ENCODE measurements at regions of chr10 and their contacts with region 1.

Region 1: GRCh38 chr10:69004821-69005220 is 16.2 kb downstream of the KIFBP start:
- DNase-seq: no peak
- ATAC-seq: peak; percentile 61
- H3K4me3 Mint-ChIP-seq: no peak overlapping the region
- H3K27ac Mint-ChIP-seq: no peak overlapping the region
- H3K4me1 Mint-ChIP-seq: peaks cover 8% of the 10 kb centered on the region
- H3K27me3 Mint-ChIP-seq: no peaks in the 10 kb centered on the region

Region 2: GRCh38 chr10:68950598-68950997 is 54.2 kb before region 1 on chr10:
- CTCF ChIA-PET with region 1: no interaction called
- DNase-seq: no peak
- ATAC-seq: no peak
- H3K4me3 Mint-ChIP-seq: no peak overlapping the region
- H3K27ac Mint-ChIP-seq: no peak overlapping the region
- H3K4me1 Mint-ChIP-seq: peaks cover 3% of the 10 kb centered on the region
- H3K27me3 Mint-ChIP-seq: no peaks in the 10 kb centered on the region

Region 3: GRCh38 chr10:69092959-69093850 is 88.4 kb after region 1 on chr10:
- CTCF ChIA-PET with region 1: interaction called, 90 read pairs
- DNase-seq: peak; percentile 93
- ATAC-seq: peak; percentile 32
- H3K4me3 Mint-ChIP-seq: peak overlapping the region; percentile 39
- H3K27ac Mint-ChIP-seq: peak overlapping the region; percentile 99
- H3K4me1 Mint-ChIP-seq: peaks cover 68% of the 10 kb centered on the region
- H3K27me3 Mint-ChIP-seq: no peaks in the 10 kb centered on the region

Region 4: GRCh38 chr10:69101451-69102095 is 96.8 kb after region 1 on chr10:
- CTCF ChIA-PET with region 1: interaction called, 90 read pairs
- DNase-seq: peak; percentile 79
- ATAC-seq: peak; percentile 70
- H3K4me3 Mint-ChIP-seq: peak overlapping the region; percentile 32
- H3K27ac Mint-ChIP-seq: peak overlapping the region; percentile 85
- H3K4me1 Mint-ChIP-seq: peaks cover 40% of the 10 kb centered on the region
- H3K27me3 Mint-ChIP-seq: no peaks in the 10 kb centered on the region

Region 5: DNA sequence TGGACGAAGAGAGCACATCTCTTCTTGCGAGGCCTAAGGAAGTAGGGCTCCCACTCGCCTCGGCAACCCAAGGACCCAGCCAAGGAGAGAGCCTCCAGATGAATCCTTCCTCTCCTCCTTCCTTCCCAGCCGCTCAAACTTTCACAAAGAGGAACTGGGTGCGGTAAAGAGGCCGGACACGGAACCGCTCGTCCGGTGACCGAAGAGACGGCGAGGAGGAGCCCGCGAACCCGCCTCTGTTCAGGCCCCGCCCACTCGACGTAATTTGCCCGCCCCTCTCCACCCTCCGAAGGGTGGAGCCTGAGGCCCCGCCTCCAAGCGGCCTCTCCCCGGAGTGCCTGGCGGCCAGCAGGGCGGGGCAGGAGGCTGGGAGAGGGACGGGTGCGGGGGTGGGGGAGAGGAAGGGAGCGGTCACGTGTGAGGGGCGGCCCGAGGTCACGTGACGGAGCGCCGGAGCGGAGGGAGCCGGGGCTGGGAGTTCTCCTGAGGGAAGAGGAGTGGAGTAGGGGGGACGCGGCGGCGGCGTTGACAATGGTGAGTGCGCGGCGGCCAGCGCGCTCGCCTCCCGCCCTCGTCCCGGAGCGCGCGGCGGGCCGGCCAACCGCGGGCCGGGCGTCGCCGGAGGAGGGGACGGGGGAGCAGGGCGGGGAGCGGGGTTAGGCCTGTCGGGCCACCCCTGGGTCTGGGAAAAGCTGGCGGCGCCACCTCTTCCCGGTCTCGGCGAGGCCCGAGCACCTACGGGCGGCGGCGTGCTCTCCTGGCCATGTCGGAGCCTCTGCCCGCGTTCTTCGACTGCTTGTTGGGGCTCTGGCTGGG is 119.1 kb after region 1 on chr10 and contains the start of gene VPS26A:
- CTCF ChIA-PET with region 1: interaction called, 15 read pairs
- DNase-seq: peak; percentile 99
- ATAC-seq: peak; percentile 92
- H3K4me3 Mint-ChIP-seq: peak within 1 kb of the TSS; percentile 89
- H3K27ac Mint-ChIP-seq: peak within 1 kb of the TSS; percentile 94
- H3K4me1 Mint-ChIP-seq: peaks cover 29% of the 10 kb centered on the region
- H3K27me3 Mint-ChIP-seq: no peaks in the 10 kb centered on the region
- total RNA-seq, gene VPS26A: 53.6 to 58.1 TPM